ENCODE measurements at regions of chr16 and their contacts with region 1.

Region 1: GRCh38 chr16:24729985-24730815 is 749 bp downstream of the TNRC6A start:
- DNase-seq: no peak
- H3K4me3 ChIP-seq: peak overlapping the region; percentile 64 to 79 (median 76)
- H3K27ac ChIP-seq: peak overlapping the region; percentile 91 to 94 (median 94)
- H3K4me1 ChIP-seq: peaks cover 45 to 54% (median 50%) of the 10 kb centered on the region in 4 donors
- H3K27me3 ChIP-seq: no peaks in the 10 kb centered on the region
- CTCF ChIP-seq: no peak
- EP300 ChIP-seq: no peak
- POLR2A ChIP-seq: no peak

Region 2: DNA sequence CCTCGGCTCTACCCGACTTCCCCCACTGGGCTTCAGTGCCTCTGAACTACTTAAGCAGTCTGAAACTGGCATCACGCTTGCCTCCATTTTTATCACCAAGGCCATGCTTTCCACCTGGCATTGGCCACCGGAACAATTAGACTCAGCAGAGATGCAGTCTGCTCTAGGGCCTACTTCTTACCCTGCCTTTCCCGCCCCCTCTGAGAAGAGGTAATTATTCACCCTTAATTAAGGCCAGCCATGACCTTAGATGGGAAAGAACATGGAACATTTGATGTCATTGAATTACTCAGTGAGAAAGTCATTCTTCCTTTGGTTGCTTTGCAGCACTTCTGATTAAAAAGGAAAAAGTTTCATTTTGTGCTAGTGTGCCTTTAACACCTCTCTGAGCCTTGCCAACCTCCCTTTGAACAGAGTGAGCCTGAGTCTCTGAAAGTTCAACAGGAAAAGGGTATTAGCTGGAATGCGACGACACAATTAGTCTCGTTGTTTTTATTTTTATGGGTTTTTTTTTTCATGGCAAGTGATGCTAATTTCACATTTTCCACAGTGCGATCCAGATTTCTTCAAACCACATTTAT is 61.6 kb before region 1 on chr16:
- intact Hi-C with region 1: loop called (anchors 10 kb)
- DNase-seq: no peak
- H3K4me3 ChIP-seq: peak overlapping the region in 2 of 4 donors; percentile 1 to 12
- H3K27ac ChIP-seq: peak overlapping the region; percentile 85 to 90 (median 89)
- H3K4me1 ChIP-seq: peaks cover 15 to 40% (median 38%) of the 10 kb centered on the region in 4 donors
- H3K27me3 ChIP-seq: no peaks in the 10 kb centered on the region
- CTCF ChIP-seq: no peak
- EP300 ChIP-seq: no peak
- POLR2A ChIP-seq: no peak